Tibial artery (tissue), 4 donors: ENCODE measurements at regions of chr16 and their contacts with region 1.

Region 1: GRCh38 chr16:75764154-75764768 is 38.0 kb upstream of the CPHXL start:
- DNase-seq: peak in 1 of 2 donors; percentile 37
- H3K4me3 ChIP-seq: no peak overlapping the region
- H3K27ac ChIP-seq: no peak overlapping the region
- H3K4me1 ChIP-seq: no peaks in the 10 kb centered on the region
- H3K27me3 ChIP-seq: no peaks in the 10 kb centered on the region
- CTCF ChIP-seq: peak; percentile 68 to 78

Region 2: DNA sequence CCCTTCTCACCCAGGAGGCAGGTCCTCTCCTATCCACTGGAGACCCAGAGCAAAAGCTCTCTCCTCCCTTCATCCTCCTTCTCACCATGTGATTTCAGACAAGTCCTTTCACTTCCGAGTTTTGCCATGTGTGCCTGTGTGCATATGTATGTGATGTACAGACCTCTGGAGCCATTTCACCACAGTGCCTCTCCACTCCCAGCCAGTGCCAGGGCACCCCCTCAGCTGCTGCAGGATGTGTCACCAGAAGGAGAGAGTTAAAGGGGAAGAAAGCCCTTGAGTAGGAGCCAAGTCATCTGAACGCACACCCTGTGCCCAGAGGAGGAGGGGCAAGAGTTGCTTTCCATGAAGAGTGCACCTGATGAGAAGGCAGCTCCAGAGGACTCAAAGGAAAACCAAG is 286.2 kb before region 1 on chr16:
- intact Hi-C with region 1: loop called (anchors 5 kb)
- DNase-seq: no peak
- H3K4me3 ChIP-seq: no peak overlapping the region
- H3K27ac ChIP-seq: no peak overlapping the region
- H3K4me1 ChIP-seq: no peaks in the 10 kb centered on the region
- H3K27me3 ChIP-seq: no peaks in the 10 kb centered on the region
- CTCF ChIP-seq: no peak

Region 3: GRCh38 chr16:75908331-75909117 is 144.3 kb after region 1 on chr16:
- intact Hi-C with region 1: no loop called
- DNase-seq: no peak
- H3K4me3 ChIP-seq: no peak overlapping the region
- H3K27ac ChIP-seq: no peak overlapping the region
- H3K4me1 ChIP-seq: no peaks in the 10 kb centered on the region
- H3K27me3 ChIP-seq: no peaks in the 10 kb centered on the region
- CTCF ChIP-seq: no peak